A549 (cell line): ENCODE measurements at regions of chr15 and their contacts with region 1.

Region 1: GRCh38 chr15:100812802-100813201 is 66.8 kb upstream of the ALDH1A3 start:
- DNase-seq: no peak
- ATAC-seq: no peak
- H3K4me3 ChIP-seq: no peak overlapping the region
- H3K27ac ChIP-seq: no peak overlapping the region
- H3K4me1 ChIP-seq: no peaks in the 10 kb centered on the region
- CTCF ChIP-seq: no peak
- EP300 ChIP-seq: no peak
- POLR2A ChIP-seq: no peak
- RAD21 ChIP-seq: no peak

Region 2: DNA sequence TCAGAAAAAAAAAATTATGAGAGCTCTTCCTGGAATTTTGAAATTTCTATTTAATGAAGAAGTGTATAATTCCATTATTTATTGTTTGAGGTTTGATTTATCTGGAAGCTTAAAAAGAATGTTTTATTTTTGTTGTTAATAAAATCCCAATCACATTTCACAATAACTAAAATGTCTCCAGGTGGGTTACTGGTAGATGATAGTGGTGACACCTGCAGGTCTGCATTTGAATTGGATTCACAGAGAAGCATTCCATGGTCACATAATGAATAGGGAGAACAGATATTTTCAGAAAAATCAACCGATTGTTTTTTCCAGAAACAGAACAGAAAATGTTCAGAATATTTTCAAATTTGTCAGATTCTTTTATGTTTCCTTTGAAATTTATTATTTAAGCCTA is 162.1 kb before region 1 on chr15:
- CTCF ChIA-PET with region 1: no interaction called
- POLR2A ChIA-PET with region 1: no interaction called
- DNase-seq: peak; percentile 21 to 34
- ATAC-seq: peak in 1 of 2 experiments; percentile 60; a peak in 2 of 6 replicates
- H3K4me3 ChIP-seq: no peak overlapping the region
- H3K27ac ChIP-seq: no peak overlapping the region
- H3K4me1 ChIP-seq: no peaks in the 10 kb centered on the region
- CTCF ChIP-seq: peak; percentile 39
- EP300 ChIP-seq: no peak
- POLR2A ChIP-seq: no peak
- RAD21 ChIP-seq: peak; percentile 25 to 31; a peak in 3 of 5 replicates

Region 3: GRCh38 chr15:100687582-100688141 is 125.1 kb before region 1 on chr15:
- CTCF ChIA-PET with region 1: no interaction called
- POLR2A ChIA-PET with region 1: no interaction called
- DNase-seq: no peak
- ATAC-seq: 0 out of 6 replicates have a peak, but pooled peaks of 1 of the 2 experiments have one; percentile 25
- H3K4me3 ChIP-seq: no peak overlapping the region
- H3K27ac ChIP-seq: no peak overlapping the region
- H3K4me1 ChIP-seq: 0 out of 3 replicates have a peak, but pooled peaks cover 4% of the 10 kb centered on the region
- CTCF ChIP-seq: no peak
- EP300 ChIP-seq: no peak
- POLR2A ChIP-seq: no peak
- RAD21 ChIP-seq: no peak

Region 4: DNA sequence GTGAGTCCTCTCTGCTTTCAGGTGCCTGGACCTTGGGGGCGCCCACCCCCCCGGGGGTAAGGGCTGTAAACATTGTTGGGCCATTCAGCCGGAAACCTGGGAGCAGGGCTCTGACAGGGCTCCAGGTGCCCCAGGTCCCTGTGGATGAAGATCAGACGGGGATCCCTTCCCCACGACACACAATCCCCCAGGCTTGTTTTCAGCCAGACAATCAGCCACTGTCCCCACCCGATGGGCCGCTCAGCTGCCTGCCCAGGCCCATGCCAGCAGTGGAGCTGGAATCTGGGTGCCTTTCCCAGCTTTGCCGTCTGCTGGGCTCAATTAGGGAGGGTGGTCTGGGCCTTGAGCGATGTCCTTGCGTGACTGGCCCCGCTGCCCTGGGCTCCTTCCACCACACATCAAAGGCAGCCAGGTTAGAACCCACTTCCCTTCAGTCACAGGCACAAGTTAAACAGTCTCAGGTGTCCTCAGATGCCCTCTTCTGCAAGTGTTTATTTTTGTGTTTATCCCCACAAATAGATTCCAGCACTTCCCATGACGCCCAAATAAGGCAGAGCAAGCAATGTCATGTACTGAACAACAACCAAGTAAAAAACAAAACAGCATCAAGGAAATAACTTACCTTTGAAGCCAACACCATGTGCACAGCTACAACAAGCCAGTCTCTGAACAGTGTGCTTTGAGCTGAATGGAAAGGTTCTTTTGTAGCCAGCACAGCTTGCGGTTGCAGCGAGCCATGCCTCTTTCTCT is 10.2 kb before region 1 on chr15:
- CTCF ChIA-PET with region 1: interaction called, 12 read pairs
- POLR2A ChIA-PET with region 1: no interaction called
- DNase-seq: no peak
- ATAC-seq: peak in 1 of 2 experiments; percentile 24; a peak in 1 of 6 replicates
- H3K4me3 ChIP-seq: no peak overlapping the region
- H3K27ac ChIP-seq: no peak overlapping the region
- H3K4me1 ChIP-seq: no peaks in the 10 kb centered on the region
- CTCF ChIP-seq: no peak
- EP300 ChIP-seq: no peak
- POLR2A ChIP-seq: no peak
- RAD21 ChIP-seq: no peak

Region 5: DNA sequence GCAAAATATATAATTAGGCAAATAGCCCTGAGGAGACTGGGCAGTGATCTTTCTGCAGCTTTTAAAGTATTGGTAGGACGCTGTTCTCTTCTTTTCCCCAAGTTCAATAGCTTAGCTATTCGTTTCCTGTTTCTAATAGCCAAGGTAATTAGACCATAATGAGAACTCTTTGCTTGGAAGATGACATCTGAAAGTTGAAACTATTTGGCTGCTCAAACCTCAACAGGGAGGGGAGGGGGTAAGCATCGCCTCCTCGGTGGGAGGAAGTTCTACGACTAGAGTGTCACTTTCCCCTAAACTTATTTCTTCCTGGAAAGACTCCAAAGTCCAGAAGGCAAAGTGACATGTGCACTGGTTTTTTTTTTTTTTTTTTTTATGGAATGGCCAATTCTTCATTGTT is 44.1 kb after region 1 on chr15:
- CTCF ChIA-PET with region 1: no interaction called
- POLR2A ChIA-PET with region 1: no interaction called
- DNase-seq: no peak
- ATAC-seq: no peak
- H3K4me3 ChIP-seq: no peak overlapping the region
- H3K27ac ChIP-seq: no peak overlapping the region
- H3K4me1 ChIP-seq: no peaks in the 10 kb centered on the region
- CTCF ChIP-seq: no peak
- EP300 ChIP-seq: no peak
- POLR2A ChIP-seq: no peak
- RAD21 ChIP-seq: no peak

Region 6: GRCh38 chr15:100889385-100890050 is 76.7 kb after region 1 on chr15:
- CTCF ChIA-PET with region 1: no interaction called
- POLR2A ChIA-PET with region 1: no interaction called
- DNase-seq: no peak
- ATAC-seq: no peak; a peak in 1 of 6 replicates
- H3K4me3 ChIP-seq: no peak overlapping the region
- H3K27ac ChIP-seq: no peak overlapping the region
- H3K4me1 ChIP-seq: no peaks in the 10 kb centered on the region
- CTCF ChIP-seq: no peak
- EP300 ChIP-seq: no peak
- POLR2A ChIP-seq: no peak
- RAD21 ChIP-seq: no peak